Activated CD4-positive, alpha-beta T cell treated with anti-CD3 and anti-CD28 coated beads for 36 hours (primary cell): ENCODE measurements at regions of chr2 and their contacts with region 1.

Region 1: GRCh38 chr2:2613279-2614199 is 282.5 kb upstream of the MYT1L start:
- DNase-seq: peak; percentile 95
- ATAC-seq: peak; percentile 99
- H3K4me3 Mint-ChIP-seq: peak overlapping the region; percentile 72
- H3K27ac Mint-ChIP-seq: peak overlapping the region; percentile 88
- H3K4me1 Mint-ChIP-seq: peaks cover 4% of the 10 kb centered on the region
- H3K27me3 Mint-ChIP-seq: peaks cover 8% of the 10 kb centered on the region

Region 2: DNA sequence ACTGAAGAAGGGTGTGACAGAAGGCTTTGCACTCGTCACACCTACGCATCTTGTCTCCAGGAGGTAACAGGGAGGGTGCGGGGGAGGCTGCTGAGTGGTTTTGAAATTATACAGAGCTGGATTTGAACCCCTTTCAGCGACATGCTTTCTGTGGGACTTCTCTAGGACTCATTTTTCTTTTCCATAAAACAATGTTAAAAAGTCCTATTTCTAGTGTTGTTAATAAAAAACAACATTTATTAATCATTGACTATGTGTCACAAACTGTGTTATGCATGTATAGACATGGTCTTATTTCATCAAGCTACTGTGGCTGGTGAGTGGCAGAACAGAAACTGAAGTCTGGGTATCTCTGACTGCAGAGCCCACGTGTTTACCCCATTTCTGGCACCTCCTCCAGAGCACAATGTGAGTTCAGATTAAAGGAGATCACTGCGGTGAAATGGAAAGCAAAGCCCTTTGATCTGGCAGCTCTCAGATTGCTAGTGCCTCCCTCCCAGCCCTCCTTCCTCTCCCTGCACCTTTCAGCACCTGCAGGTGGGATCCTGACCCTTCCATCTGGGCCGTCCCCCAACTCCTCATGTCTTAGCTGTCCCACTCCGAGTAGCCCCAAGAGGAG is 33.0 kb after region 1 on chr2:
- CTCF ChIA-PET with region 1: no interaction called
- POLR2A ChIA-PET with region 1: no interaction called
- intact Hi-C with region 1: loop called (anchors 1 kb)
- DNase-seq: peak; percentile 78
- ATAC-seq: peak; percentile 95
- H3K4me3 Mint-ChIP-seq: peak overlapping the region; percentile 49
- H3K27ac Mint-ChIP-seq: peak overlapping the region; percentile 78
- H3K4me1 Mint-ChIP-seq: peaks cover 38% of the 10 kb centered on the region
- H3K27me3 Mint-ChIP-seq: no peaks in the 10 kb centered on the region

Region 3: GRCh38 chr2:3223080-3223923 is 609.8 kb after region 1 on chr2:
- CTCF ChIA-PET with region 1: no interaction called
- POLR2A ChIA-PET with region 1: no interaction called
- intact Hi-C with region 1: loop called in 1 of 2 experiments (anchors 5 kb)
- DNase-seq: peak; percentile 96
- ATAC-seq: peak; percentile 92
- H3K4me3 Mint-ChIP-seq: peak overlapping the region; percentile 51
- H3K27ac Mint-ChIP-seq: peak overlapping the region; percentile 99
- H3K4me1 Mint-ChIP-seq: peaks cover 40% of the 10 kb centered on the region
- H3K27me3 Mint-ChIP-seq: no peaks in the 10 kb centered on the region

Region 4: DNA sequence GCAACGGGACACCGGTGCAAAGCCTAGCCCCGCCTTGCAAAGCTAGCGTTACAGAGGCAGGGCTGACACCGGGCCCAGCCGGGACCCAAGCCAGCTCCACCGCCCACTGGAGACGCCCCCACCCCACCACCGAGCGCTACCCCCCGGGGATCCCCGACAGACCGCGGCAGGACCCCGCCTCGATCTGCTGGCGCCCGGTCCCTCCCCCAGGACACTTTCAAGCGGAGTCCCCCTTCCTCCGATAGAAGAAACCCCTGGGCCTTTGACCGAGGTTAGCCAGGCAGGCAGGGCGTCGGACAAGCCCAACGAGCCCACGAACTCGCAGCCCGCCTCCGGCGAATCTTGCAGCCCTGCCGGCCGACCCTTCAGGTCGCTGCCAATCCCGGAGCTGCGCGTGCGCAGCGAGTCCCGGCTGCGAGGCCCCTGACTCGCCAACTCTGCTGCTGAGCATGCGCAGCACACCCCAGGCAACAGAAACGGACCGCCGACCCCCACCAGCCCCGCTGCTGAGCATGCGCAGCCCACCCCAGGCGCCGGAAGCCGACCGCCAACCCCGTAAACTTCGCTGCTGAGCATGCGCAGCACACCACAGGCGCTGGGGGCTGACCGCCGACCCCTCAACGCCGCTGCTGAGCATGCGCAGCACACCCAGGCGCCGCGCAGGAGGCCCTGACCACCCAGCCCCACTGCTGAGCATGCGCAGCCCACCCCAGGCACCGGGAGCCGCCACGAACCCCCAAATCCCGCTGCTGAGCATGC is 905.1 kb after region 1 on chr2:
- CTCF ChIA-PET with region 1: no interaction called
- POLR2A ChIA-PET with region 1: no interaction called
- intact Hi-C with region 1: loop called in 1 of 2 experiments (anchors 5 kb)
- DNase-seq: peak; percentile 99
- ATAC-seq: peak; percentile 83
- H3K4me3 Mint-ChIP-seq: peak overlapping the region; percentile 84
- H3K27ac Mint-ChIP-seq: peak overlapping the region; percentile 83
- H3K4me1 Mint-ChIP-seq: peaks cover 38% of the 10 kb centered on the region
- H3K27me3 Mint-ChIP-seq: no peaks in the 10 kb centered on the region